Caco-2 (cell line): ENCODE measurements at regions of chr12 and their contacts with region 1.

Region 1: DNA sequence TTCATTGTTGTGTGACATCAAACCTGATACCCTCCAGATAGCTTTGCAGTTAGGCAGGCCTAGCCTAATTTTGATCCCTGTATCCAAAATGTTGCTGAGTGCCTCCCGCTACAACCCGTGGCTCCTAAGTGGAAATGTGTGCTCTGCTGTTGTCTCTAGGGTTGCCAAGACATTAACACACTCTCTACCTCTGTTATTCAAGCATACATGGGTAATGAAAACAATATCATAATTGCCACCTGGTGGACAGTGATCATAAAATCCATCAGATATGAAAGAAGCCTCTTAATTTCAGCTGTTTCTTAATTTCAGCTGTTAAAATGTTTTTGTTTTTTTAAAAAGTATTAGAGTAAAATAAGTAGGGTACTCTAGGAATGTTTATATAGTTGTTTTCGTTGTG is 93.5 kb downstream of the PLEKHA5 start:
- DNase-seq: no peak
- H3K4me3 ChIP-seq: no peak overlapping the region
- H3K4me3 Mint-ChIP-seq: no peak overlapping the region
- H3K27ac Mint-ChIP-seq: no peak overlapping the region
- H3K4me1 ChIP-seq: 0 out of 2 replicates have a peak, but pooled peaks cover 3% of the 10 kb centered on the region
- H3K4me1 Mint-ChIP-seq: peaks cover 13% of the 10 kb centered on the region
- H3K27me3 ChIP-seq: no peaks in the 10 kb centered on the region
- H3K27me3 Mint-ChIP-seq: no peaks in the 10 kb centered on the region
- CTCF ChIP-seq: peak; percentile 14 to 48

Region 2: GRCh38 chr12:18861287-18861858 is 361.6 kb before region 1 on chr12:
- CTCF ChIA-PET with region 1: no interaction called
- POLR2A ChIA-PET with region 1: no interaction called
- intact Hi-C with region 1: loop called (anchors 1 kb)
- DNase-seq: peak in 1 of 2 experiments; percentile 56
- H3K4me3 ChIP-seq: no peak overlapping the region
- H3K4me3 Mint-ChIP-seq: no peak overlapping the region
- H3K27ac Mint-ChIP-seq: no peak overlapping the region
- H3K4me1 ChIP-seq: no peaks in the 10 kb centered on the region
- H3K4me1 Mint-ChIP-seq: no peaks in the 10 kb centered on the region
- H3K27me3 ChIP-seq: no peaks in the 10 kb centered on the region; the same call in 1 of the 2 replicates
- H3K27me3 Mint-ChIP-seq: peaks cover 13% of the 10 kb centered on the region
- CTCF ChIP-seq: peak; percentile 66 to 92

Region 3: GRCh38 chr12:19212245-19212644 is 10.8 kb before region 1 on chr12:
- CTCF ChIA-PET with region 1: no interaction called
- POLR2A ChIA-PET with region 1: interaction called, 12 read pairs
- intact Hi-C with region 1: no loop called
- DNase-seq: no peak
- H3K4me3 ChIP-seq: no peak overlapping the region
- H3K4me3 Mint-ChIP-seq: no peak overlapping the region
- H3K27ac Mint-ChIP-seq: no peak overlapping the region
- H3K4me1 ChIP-seq: peaks cover 5% of the 10 kb centered on the region; the same call in 1 of the 2 replicates
- H3K4me1 Mint-ChIP-seq: no peaks in the 10 kb centered on the region
- H3K27me3 ChIP-seq: no peaks in the 10 kb centered on the region
- H3K27me3 Mint-ChIP-seq: no peaks in the 10 kb centered on the region
- CTCF ChIP-seq: no peak

Region 4: DNA sequence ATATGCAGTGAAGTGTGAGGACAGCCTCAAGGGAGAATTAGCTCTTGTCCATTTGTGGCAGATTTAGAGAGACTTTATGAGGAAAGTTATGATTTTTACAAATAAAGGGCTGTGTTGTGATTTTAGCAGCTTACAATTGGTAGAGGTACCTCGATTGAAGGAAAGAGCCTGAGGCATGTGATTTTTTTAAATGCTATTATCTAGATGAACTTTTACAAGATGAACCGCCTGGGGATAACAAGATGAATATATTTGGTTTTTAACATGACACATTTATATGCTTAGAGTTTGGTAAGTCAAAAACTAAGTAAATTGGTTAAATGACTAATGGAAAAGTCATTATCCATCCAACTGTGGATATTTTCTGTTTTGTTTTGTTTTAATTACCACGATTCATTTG is 268.8 kb after region 1 on chr12:
- CTCF ChIA-PET with region 1: no interaction called
- POLR2A ChIA-PET with region 1: no interaction called
- intact Hi-C with region 1: no loop called
- DNase-seq: no peak
- H3K4me3 ChIP-seq: no peak overlapping the region
- H3K4me3 Mint-ChIP-seq: no peak overlapping the region
- H3K27ac Mint-ChIP-seq: peak overlapping the region; percentile 30
- H3K4me1 ChIP-seq: no peaks in the 10 kb centered on the region
- H3K4me1 Mint-ChIP-seq: no peaks in the 10 kb centered on the region
- H3K27me3 ChIP-seq: no peaks in the 10 kb centered on the region
- H3K27me3 Mint-ChIP-seq: no peaks in the 10 kb centered on the region
- CTCF ChIP-seq: no peak

Region 5: GRCh38 chr12:19800884-19801283 is 577.9 kb after region 1 on chr12:
- CTCF ChIA-PET with region 1: no interaction called
- POLR2A ChIA-PET with region 1: no interaction called
- intact Hi-C with region 1: no loop called
- DNase-seq: no peak
- H3K4me3 ChIP-seq: no peak overlapping the region
- H3K4me3 Mint-ChIP-seq: no peak overlapping the region
- H3K27ac Mint-ChIP-seq: no peak overlapping the region
- H3K4me1 ChIP-seq: no peaks in the 10 kb centered on the region
- H3K4me1 Mint-ChIP-seq: no peaks in the 10 kb centered on the region
- H3K27me3 ChIP-seq: no peaks in the 10 kb centered on the region
- H3K27me3 Mint-ChIP-seq: no peaks in the 10 kb centered on the region
- CTCF ChIP-seq: no peak